Caco-2 (cell line): ENCODE measurements at regions of chr17 and their contacts with region 1.

Region 1: DNA sequence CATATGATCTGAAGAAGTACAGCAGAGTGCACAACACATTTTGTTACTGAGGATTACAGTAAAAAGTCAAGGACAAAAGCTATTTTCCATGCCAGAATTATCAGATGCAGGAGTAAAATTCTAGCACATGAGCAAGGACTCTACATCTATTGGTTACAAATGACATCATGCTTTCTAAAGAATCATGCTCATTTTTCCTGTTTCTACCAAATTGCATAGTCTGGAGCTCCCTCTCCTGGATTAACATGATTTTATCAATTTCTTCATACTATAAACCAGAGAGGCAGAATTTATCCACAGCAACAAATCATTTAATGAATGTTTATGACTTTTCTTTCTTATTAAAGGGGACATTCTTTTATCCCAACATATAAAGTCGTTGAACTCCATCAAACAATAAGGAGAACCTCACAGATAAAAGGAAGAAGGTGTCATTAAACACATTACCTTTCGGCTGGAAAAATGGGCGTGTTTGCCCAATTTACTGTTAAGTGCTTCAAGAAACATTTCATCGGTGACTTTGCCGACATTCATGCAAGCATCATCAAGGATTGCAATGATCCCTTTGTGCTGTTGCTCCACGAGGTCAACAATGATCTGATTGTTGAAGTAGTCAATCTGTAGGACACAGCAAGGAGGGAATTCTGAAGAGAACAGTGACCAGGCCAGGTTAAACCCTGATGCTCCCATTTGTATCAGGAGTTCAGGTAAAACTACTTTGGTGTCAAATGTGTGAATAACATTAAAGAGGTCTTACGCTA is 121.7 kb downstream of the MYO1D start:
- DNase-seq: peak in 1 of 2 experiments; percentile 24
- H3K4me3 ChIP-seq: no peak overlapping the region
- H3K4me3 Mint-ChIP-seq: no peak overlapping the region
- H3K27ac Mint-ChIP-seq: no peak overlapping the region
- H3K4me1 ChIP-seq: no peaks in the 10 kb centered on the region
- H3K4me1 Mint-ChIP-seq: peaks cover 12% of the 10 kb centered on the region
- H3K27me3 ChIP-seq: no peaks in the 10 kb centered on the region
- H3K27me3 Mint-ChIP-seq: no peaks in the 10 kb centered on the region
- CTCF ChIP-seq: peak; percentile 19 to 50

Region 2: DNA sequence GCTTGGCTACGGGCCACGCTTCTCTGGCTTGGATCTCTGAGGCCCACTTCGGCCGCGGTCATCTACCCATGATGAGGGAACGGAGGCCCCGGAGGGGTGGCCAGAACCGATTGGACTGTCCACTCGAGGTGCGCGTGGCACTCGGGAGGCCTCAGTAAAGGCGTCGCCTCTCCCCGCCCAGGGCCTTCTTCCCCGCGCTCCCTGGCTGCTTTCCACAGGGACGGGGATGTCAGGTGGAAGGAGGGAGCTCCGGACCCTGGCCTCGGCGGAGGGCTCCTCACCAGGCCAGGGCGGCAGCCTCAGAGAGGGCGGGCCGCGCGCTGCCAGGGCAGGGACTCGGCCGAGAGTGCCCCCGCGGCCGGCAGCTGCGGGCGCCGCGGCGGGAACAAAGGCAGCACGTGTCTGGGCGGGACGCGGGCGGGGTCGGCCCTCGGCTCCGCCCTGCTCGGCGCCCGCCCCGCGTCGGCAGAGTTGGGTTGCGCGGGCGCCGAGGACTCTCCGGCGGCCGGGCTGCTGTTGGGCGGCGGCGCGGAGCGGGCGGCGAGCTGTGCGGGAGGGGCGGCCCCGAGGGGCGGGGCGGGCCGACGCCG is 269.0 kb before region 1 on chr17:
- CTCF ChIA-PET with region 1: interaction called, 4 read pairs
- POLR2A ChIA-PET with region 1: no interaction called
- intact Hi-C with region 1: loop called (anchors 1 kb)
- DNase-seq: peak; percentile 78 to 88
- H3K4me3 ChIP-seq: peak overlapping the region; percentile 77
- H3K4me3 Mint-ChIP-seq: peak overlapping the region; percentile 88
- H3K27ac Mint-ChIP-seq: peak overlapping the region; percentile 89
- H3K4me1 ChIP-seq: peaks cover 18% of the 10 kb centered on the region
- H3K4me1 Mint-ChIP-seq: peaks cover 24% of the 10 kb centered on the region
- H3K27me3 ChIP-seq: no peaks in the 10 kb centered on the region
- H3K27me3 Mint-ChIP-seq: no peaks in the 10 kb centered on the region
- CTCF ChIP-seq: no peak

Region 3: DNA sequence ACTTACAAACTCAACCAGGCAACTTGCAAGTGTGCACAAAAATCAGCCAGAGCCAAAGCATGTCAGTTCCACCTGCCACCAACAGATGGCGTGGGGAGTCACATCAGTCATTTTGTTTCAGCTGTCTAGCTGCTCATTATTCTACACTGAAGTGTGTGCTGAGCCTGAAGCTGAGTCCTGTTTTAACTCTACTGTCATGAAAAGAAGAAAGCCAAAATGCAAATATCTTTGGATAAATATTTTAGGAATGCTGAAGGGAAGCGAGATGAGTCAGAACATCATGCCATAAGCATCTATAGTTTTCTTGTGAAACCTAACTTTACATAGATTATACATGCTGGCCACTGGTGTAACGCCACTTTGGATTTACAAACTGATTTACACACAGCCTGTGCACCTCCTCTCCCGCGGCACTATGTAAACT is 95.8 kb before region 1 on chr17:
- CTCF ChIA-PET with region 1: interaction called, 3 read pairs
- POLR2A ChIA-PET with region 1: no interaction called
- intact Hi-C with region 1: loop called (anchors 1 kb)
- DNase-seq: peak; percentile 63 to 76
- H3K4me3 ChIP-seq: no peak overlapping the region
- H3K4me3 Mint-ChIP-seq: no peak overlapping the region
- H3K27ac Mint-ChIP-seq: no peak overlapping the region
- H3K4me1 ChIP-seq: no peaks in the 10 kb centered on the region
- H3K4me1 Mint-ChIP-seq: peaks cover 9% of the 10 kb centered on the region
- H3K27me3 ChIP-seq: no peaks in the 10 kb centered on the region
- H3K27me3 Mint-ChIP-seq: no peaks in the 10 kb centered on the region
- CTCF ChIP-seq: peak; percentile 90 to 91

Region 4: GRCh38 chr17:32701871-32702270 is 53.4 kb before region 1 on chr17:
- CTCF ChIA-PET with region 1: no interaction called
- POLR2A ChIA-PET with region 1: no interaction called
- intact Hi-C with region 1: no loop called
- DNase-seq: no peak
- H3K4me3 ChIP-seq: no peak overlapping the region
- H3K4me3 Mint-ChIP-seq: no peak overlapping the region
- H3K27ac Mint-ChIP-seq: no peak overlapping the region
- H3K4me1 ChIP-seq: 0 out of 2 replicates have a peak, but pooled peaks cover 6% of the 10 kb centered on the region
- H3K4me1 Mint-ChIP-seq: no peaks in the 10 kb centered on the region
- H3K27me3 ChIP-seq: no peaks in the 10 kb centered on the region
- H3K27me3 Mint-ChIP-seq: no peaks in the 10 kb centered on the region
- CTCF ChIP-seq: no peak